Activated T-helper 2 cell treated with anti-CD3 and anti-CD28 coated beads, Interferon-gamma antibody, Interleukin-2, Interleukin-4, amounts not matched to agents 10 μg/mL and 5 μg/mL and 100 μg/mL, durations not matched to agents 14 hours and 24 hours and 36 hours (primary cell): ENCODE measurements at regions of chr2 and their contacts with region 1.

Region 1: DNA sequence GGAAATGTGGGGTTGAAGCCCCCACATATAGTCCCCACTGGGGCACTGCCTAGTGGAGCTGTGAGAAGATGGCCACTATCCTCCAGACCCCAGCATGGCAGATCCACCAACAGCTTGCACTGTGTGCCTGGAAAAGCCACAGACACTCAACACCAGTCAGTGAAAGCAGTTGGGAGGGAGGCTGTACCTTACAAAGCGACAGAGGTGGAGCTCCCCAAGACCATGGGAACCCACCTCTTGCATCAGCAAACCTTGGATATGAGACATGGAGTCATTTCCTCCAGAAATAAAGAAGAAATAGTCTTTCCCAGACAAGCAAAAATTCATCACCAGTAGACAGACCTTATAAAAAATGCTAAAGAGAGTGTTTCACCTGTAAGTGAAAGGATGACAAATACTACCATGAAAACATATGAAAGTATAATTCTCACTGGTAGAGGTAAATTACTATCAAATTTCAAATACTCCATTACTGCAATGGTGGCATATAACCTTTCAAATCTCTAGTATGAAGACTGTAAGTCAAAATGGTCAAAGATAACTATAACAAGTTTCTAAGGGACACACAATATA is 152.6 kb upstream of the EPHA4 start:
- DNase-seq: no peak
- H3K4me3 Mint-ChIP-seq: no peak overlapping the region
- H3K27ac Mint-ChIP-seq: no peak overlapping the region
- H3K4me1 Mint-ChIP-seq: no peaks in the 10 kb centered on the region
- H3K27me3 Mint-ChIP-seq: no peaks in the 10 kb centered on the region

Region 2: DNA sequence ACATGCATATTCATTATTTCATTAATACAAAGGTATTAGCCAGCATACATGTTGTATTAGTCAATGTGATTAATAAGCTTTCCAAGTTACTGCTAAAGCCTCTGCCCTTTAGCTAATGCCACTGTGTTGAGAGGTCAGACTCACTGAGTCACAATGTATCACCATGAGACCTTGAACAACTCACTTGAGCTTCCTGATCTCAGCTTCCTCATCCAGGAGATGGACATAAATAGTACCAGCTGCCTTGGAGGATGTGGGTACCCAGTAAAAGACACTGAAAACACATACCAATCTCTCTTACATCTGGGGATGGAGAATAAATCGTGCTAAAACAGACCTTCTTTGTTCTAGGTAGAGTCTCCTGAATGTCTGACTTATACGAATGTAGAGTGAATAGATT is 377.2 kb before region 1 on chr2:
- intact Hi-C with region 1: no loop called
- DNase-seq: no peak
- H3K4me3 Mint-ChIP-seq: no peak overlapping the region
- H3K27ac Mint-ChIP-seq: no peak overlapping the region
- H3K4me1 Mint-ChIP-seq: no peaks in the 10 kb centered on the region
- H3K27me3 Mint-ChIP-seq: no peaks in the 10 kb centered on the region

Region 3: GRCh38 chr2:221517696-221518151 is 207.0 kb before region 1 on chr2:
- intact Hi-C with region 1: loop called (anchors 10 kb)
- DNase-seq: peak; percentile 73
- H3K4me3 Mint-ChIP-seq: no peak overlapping the region
- H3K27ac Mint-ChIP-seq: no peak overlapping the region
- H3K4me1 Mint-ChIP-seq: peaks cover 25% of the 10 kb centered on the region
- H3K27me3 Mint-ChIP-seq: peaks cover 7% of the 10 kb centered on the region

Region 4: DNA sequence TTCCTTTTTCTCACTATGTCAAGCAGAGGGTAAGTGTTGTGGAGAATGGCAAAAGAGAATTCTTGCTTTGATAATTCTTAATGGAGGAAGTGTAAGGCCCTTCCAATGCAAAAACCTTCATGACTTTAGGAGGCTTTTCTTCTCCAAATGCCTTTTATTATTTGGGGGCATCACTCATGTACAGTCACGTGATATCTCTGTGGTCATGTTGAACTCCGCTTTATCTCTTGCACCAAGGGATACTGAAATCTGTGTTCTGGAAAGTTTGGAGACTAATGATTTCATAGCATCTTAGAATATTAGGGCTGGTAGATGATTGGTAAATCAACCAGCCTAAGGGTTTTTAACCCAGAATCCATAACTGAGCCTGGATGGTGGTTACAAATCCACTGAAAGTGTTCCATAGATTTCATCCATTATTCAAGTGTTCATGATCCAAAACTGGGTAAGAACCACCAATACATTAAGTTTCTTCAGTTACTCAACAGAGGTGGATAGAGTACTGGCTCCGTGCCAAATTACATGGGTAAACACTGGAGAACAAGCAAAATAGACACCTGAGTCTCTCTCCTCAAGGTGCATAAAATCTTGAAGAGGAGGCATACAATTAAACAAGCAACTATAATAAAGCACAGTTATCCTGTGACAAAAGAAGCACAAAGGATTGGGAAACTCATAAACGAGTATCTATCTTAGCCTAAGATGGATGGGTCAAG is 16.9 kb after region 1 on chr2:
- intact Hi-C with region 1: no loop called
- DNase-seq: no peak
- H3K4me3 Mint-ChIP-seq: no peak overlapping the region
- H3K27ac Mint-ChIP-seq: no peak overlapping the region
- H3K4me1 Mint-ChIP-seq: no peaks in the 10 kb centered on the region
- H3K27me3 Mint-ChIP-seq: no peaks in the 10 kb centered on the region